CD4-positive, alpha-beta memory T cell (primary cell): ENCODE measurements at regions of chr12 and their contacts with region 1.

Region 1: GRCh38 chr12:64890873-64891468 is 66.5 kb downstream of the TBC1D30 start:
- DNase-seq: peak in 4 of 5 donors; percentile 50 to 56 (median 54)
- H3K4me3 ChIP-seq: no peak overlapping the region
- H3K4me3 Mint-ChIP-seq: no peak overlapping the region
- H3K27ac ChIP-seq: no peak overlapping the region
- H3K27ac Mint-ChIP-seq: no peak overlapping the region
- H3K4me1 ChIP-seq: no peaks in the 10 kb centered on the region
- H3K4me1 Mint-ChIP-seq: no peaks in the 10 kb centered on the region
- H3K27me3 ChIP-seq: no peaks in the 10 kb centered on the region
- H3K27me3 Mint-ChIP-seq: peaks cover 13 to 22% of the 10 kb centered on the region in 2 donors

Region 2: GRCh38 chr12:63849106-63849620 is 1041.8 kb before region 1 on chr12:
- CTCF ChIA-PET with region 1: no interaction called
- POLR2A ChIA-PET with region 1: no interaction called
- intact Hi-C with region 1: no loop called
- DNase-seq: no peak
- H3K4me3 ChIP-seq: no peak overlapping the region
- H3K4me3 Mint-ChIP-seq: no peak overlapping the region
- H3K27ac ChIP-seq: no peak overlapping the region
- H3K27ac Mint-ChIP-seq: no peak overlapping the region
- H3K4me1 ChIP-seq: peaks cover 10% of the 10 kb centered on the region
- H3K4me1 Mint-ChIP-seq: peaks cover 4 to 8% (median 6%) of the 10 kb centered on the region in 4 donors
- H3K27me3 ChIP-seq: no peaks in the 10 kb centered on the region
- H3K27me3 Mint-ChIP-seq: peaks cover 11 to 18% of the 10 kb centered on the region in 2 donors

Region 3: DNA sequence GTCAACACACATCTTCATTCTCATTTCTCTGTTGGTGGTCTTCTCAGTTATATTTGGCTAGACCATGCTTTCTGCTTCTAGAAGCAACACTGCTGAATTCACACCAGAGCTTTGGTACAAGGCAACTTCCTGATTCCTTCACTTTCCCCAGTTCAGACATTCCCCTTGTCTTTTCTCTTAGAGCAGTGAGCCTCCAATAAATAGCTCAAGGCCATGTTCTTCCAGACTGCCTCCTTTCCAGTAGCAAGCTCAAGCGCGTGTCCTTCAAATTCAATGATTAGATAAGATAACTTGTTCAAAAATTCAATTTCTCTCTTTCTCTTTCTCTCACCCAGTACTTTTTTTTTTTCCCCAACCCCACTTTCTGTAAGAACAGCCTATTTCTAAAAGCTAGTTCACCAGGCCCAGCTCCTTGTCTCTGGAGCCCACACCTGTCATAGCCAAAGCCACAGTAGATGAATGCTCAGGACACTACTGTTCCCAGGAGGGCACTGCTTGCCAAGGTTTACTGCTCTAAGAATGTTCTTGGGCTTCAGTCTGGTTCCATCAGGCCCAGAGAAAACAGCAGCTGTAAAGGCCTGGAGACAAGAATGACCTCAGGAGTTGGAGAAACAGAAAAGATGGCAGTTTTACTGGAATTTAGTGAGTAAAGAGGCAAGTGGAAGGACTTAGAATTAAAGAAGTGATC is 421.4 kb before region 1 on chr12:
- CTCF ChIA-PET with region 1: no interaction called
- POLR2A ChIA-PET with region 1: no interaction called
- intact Hi-C with region 1: no loop called
- DNase-seq: no peak
- H3K4me3 ChIP-seq: no peak overlapping the region
- H3K4me3 Mint-ChIP-seq: no peak overlapping the region
- H3K27ac ChIP-seq: no peak overlapping the region
- H3K27ac Mint-ChIP-seq: peak overlapping the region in 4 of 7 donors; percentile 20 to 58 (median 34)
- H3K4me1 ChIP-seq: no peaks in the 10 kb centered on the region
- H3K4me1 Mint-ChIP-seq: peaks cover 4 to 11% (median 4%) of the 10 kb centered on the region in 4 donors
- H3K27me3 ChIP-seq: no peaks in the 10 kb centered on the region
- H3K27me3 Mint-ChIP-seq: no peaks in the 10 kb centered on the region

Region 4: DNA sequence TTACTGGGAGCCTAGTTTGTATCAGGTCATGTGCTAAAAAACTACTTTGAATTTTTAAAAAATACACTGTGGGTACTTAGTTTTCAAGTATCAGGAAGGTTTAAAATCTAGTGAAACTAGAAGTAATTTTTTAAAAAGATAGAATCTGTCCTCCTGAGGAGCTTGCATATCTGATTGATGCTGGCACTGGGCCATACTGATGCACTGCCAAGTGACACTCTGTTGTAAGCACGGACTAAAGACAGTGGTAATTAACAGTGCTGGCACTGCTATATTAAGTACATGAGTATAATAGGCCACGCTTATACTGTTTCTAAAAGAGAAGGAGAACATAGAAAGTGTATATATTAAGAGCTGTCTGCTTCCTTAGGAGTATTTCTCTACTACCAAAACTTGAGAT is 76.5 kb before region 1 on chr12:
- CTCF ChIA-PET with region 1: no interaction called
- POLR2A ChIA-PET with region 1: no interaction called
- intact Hi-C with region 1: no loop called
- DNase-seq: no peak
- H3K4me3 ChIP-seq: no peak overlapping the region
- H3K4me3 Mint-ChIP-seq: no peak overlapping the region
- H3K27ac ChIP-seq: no peak overlapping the region
- H3K27ac Mint-ChIP-seq: no peak overlapping the region
- H3K4me1 ChIP-seq: no peaks in the 10 kb centered on the region
- H3K4me1 Mint-ChIP-seq: peaks cover 0 to 2% (median 0%) of the 10 kb centered on the region in 4 donors
- H3K27me3 ChIP-seq: no peaks in the 10 kb centered on the region
- H3K27me3 Mint-ChIP-seq: peaks cover 16 to 22% of the 10 kb centered on the region in 2 donors

Region 5: GRCh38 chr12:64877363-64878004 is 13.5 kb before region 1 on chr12:
- CTCF ChIA-PET with region 1: interaction called, 13 read pairs
- POLR2A ChIA-PET with region 1: no interaction called
- intact Hi-C with region 1: no loop called
- DNase-seq: no peak
- H3K4me3 ChIP-seq: no peak overlapping the region
- H3K4me3 Mint-ChIP-seq: no peak overlapping the region
- H3K27ac ChIP-seq: no peak overlapping the region
- H3K27ac Mint-ChIP-seq: no peak overlapping the region
- H3K4me1 ChIP-seq: no peaks in the 10 kb centered on the region
- H3K4me1 Mint-ChIP-seq: peaks cover 0 to 2% (median 0%) of the 10 kb centered on the region in 4 donors
- H3K27me3 ChIP-seq: no peaks in the 10 kb centered on the region
- H3K27me3 Mint-ChIP-seq: peaks cover 0 to 2% of the 10 kb centered on the region in 2 donors

Region 6: DNA sequence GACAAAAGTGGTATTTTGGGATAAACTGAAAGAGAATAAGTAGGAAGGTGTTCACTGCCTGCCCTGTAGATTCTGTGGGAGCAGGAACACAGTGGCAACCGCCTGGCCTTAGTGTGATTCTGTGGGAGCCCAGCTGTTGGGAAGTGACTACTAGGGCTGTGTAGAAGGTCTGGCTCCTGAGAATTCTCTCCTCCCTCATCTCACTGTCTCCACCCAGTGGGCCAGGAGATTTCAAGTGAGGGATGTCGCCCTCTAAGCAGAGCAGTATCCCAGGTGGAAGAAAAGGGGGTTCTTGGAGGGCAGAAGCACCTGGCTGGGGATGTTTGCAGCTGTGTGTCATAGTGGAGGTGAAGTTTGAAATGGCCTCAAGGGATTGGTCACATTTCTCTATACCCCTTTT is 47.2 kb after region 1 on chr12:
- CTCF ChIA-PET with region 1: no interaction called
- POLR2A ChIA-PET with region 1: no interaction called
- intact Hi-C with region 1: no loop called
- DNase-seq: no peak
- H3K4me3 ChIP-seq: no peak overlapping the region
- H3K4me3 Mint-ChIP-seq: no peak overlapping the region
- H3K27ac ChIP-seq: no peak overlapping the region
- H3K27ac Mint-ChIP-seq: no peak overlapping the region
- H3K4me1 ChIP-seq: no peaks in the 10 kb centered on the region
- H3K4me1 Mint-ChIP-seq: no peaks in the 10 kb centered on the region
- H3K27me3 ChIP-seq: no peaks in the 10 kb centered on the region
- H3K27me3 Mint-ChIP-seq: peaks cover 1 to 7% of the 10 kb centered on the region in 2 donors

Region 7: GRCh38 chr12:65232476-65233077 is 341.6 kb after region 1 on chr12:
- CTCF ChIA-PET with region 1: interaction called, 61 read pairs
- POLR2A ChIA-PET with region 1: no interaction called
- intact Hi-C with region 1: loop called (anchors 1 kb)
- DNase-seq: peak in 4 of 5 donors; percentile 8 to 25 (median 16)
- H3K4me3 ChIP-seq: no peak overlapping the region
- H3K4me3 Mint-ChIP-seq: no peak overlapping the region
- H3K27ac ChIP-seq: no peak overlapping the region
- H3K27ac Mint-ChIP-seq: peak overlapping the region in 4 of 7 donors; percentile 76 to 86 (median 81)
- H3K4me1 ChIP-seq: peaks cover 5% of the 10 kb centered on the region
- H3K4me1 Mint-ChIP-seq: peaks cover 6 to 13% (median 8%) of the 10 kb centered on the region in 4 donors
- H3K27me3 ChIP-seq: no peaks in the 10 kb centered on the region
- H3K27me3 Mint-ChIP-seq: no peaks in the 10 kb centered on the region

Region 8: GRCh38 chr12:66087365-66087943 is 1196.5 kb after region 1 on chr12:
- CTCF ChIA-PET with region 1: interaction called, 10 read pairs
- POLR2A ChIA-PET with region 1: no interaction called
- intact Hi-C with region 1: no loop called
- DNase-seq: peak; percentile 16 to 33 (median 22)
- H3K4me3 ChIP-seq: no peak overlapping the region
- H3K4me3 Mint-ChIP-seq: no peak overlapping the region
- H3K27ac ChIP-seq: no peak overlapping the region
- H3K27ac Mint-ChIP-seq: no peak overlapping the region
- H3K4me1 ChIP-seq: no peaks in the 10 kb centered on the region
- H3K4me1 Mint-ChIP-seq: no peaks in the 10 kb centered on the region
- H3K27me3 ChIP-seq: no peaks in the 10 kb centered on the region
- H3K27me3 Mint-ChIP-seq: peaks cover 24% of the 10 kb centered on the region in 2 donors

Region 9: DNA sequence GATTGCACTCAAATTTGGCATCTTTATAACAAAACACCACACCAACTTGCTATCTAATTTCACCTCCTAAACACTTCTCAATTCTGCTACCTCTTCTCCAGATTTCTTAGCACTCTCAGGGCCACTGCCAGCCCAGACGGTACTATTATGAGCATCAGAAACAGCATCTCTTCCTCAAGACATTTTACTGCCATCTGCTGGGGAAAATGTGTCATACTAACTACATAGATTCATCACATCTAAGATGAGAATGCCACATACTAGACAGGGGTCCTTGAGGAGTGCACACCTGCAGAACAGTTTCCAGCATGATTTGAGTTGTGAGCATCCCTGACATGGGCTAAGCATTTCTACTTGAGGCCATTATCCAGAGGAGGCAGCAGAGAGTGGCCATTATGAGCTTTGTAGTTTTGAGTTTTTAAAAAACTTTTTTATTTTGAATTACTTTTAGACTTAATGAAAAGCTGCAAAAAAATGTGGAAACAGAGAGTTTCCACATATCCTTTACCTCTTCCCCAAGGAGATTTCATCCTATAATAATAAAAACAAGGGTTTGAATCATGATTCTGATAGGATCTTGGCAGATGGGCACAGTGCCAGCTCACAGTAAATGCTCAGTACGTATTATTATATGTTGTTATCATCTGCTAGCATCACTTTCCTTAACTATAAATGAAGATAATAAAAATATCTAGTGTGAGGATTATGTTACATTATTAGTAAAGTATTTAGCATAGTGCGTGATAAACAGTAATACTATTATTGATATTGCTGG is 1803.1 kb after region 1 on chr12:
- CTCF ChIA-PET with region 1: interaction called, 3 read pairs
- POLR2A ChIA-PET with region 1: no interaction called
- intact Hi-C with region 1: loop called (anchors 1 kb)
- DNase-seq: peak in 4 of 5 donors; percentile 33 to 48 (median 36)
- H3K4me3 ChIP-seq: no peak overlapping the region
- H3K4me3 Mint-ChIP-seq: no peak overlapping the region
- H3K27ac ChIP-seq: no peak overlapping the region
- H3K27ac Mint-ChIP-seq: no peak overlapping the region
- H3K4me1 ChIP-seq: no peaks in the 10 kb centered on the region
- H3K4me1 Mint-ChIP-seq: peaks cover 0 to 1% (median 0%) of the 10 kb centered on the region in 4 donors
- H3K27me3 ChIP-seq: no peaks in the 10 kb centered on the region
- H3K27me3 Mint-ChIP-seq: peaks cover 5 to 6% of the 10 kb centered on the region in 2 donors